Activated naive CD8-positive, alpha-beta T cell treated with anti-CD3 and anti-CD28 coated beads, Interleukin-2, amount 10 ng/mL, durations not matched to agents 7 days and 5 days (primary cell): ENCODE measurements at regions of chr12 and their contacts with region 1.

Region 1: GRCh38 chr12:111428728-111429175 is 23.0 kb downstream of the SH2B3 start:
- DNase-seq: no peak
- ATAC-seq: no peak
- H3K4me3 Mint-ChIP-seq: peak overlapping the region; percentile 84
- H3K27ac Mint-ChIP-seq: peak overlapping the region; percentile 97
- H3K4me1 Mint-ChIP-seq: peaks cover 70% of the 10 kb centered on the region
- H3K27me3 Mint-ChIP-seq: no peaks in the 10 kb centered on the region

Region 2: GRCh38 chr12:111274777-111275176 is 154.0 kb before region 1 on chr12:
- POLR2A ChIA-PET with region 1: no interaction called
- DNase-seq: no peak
- ATAC-seq: no peak
- H3K4me3 Mint-ChIP-seq: no peak overlapping the region
- H3K27ac Mint-ChIP-seq: no peak overlapping the region
- H3K4me1 Mint-ChIP-seq: peaks cover 3% of the 10 kb centered on the region
- H3K27me3 Mint-ChIP-seq: peaks cover 17% of the 10 kb centered on the region

Region 3: GRCh38 chr12:111298582-111299436 is 129.9 kb before region 1 on chr12:
- POLR2A ChIA-PET with region 1: no interaction called
- DNase-seq: peak; percentile 65
- ATAC-seq: peak; percentile 42
- H3K4me3 Mint-ChIP-seq: no peak overlapping the region
- H3K27ac Mint-ChIP-seq: no peak overlapping the region
- H3K4me1 Mint-ChIP-seq: no peaks in the 10 kb centered on the region
- H3K27me3 Mint-ChIP-seq: no peaks in the 10 kb centered on the region

Region 4: DNA sequence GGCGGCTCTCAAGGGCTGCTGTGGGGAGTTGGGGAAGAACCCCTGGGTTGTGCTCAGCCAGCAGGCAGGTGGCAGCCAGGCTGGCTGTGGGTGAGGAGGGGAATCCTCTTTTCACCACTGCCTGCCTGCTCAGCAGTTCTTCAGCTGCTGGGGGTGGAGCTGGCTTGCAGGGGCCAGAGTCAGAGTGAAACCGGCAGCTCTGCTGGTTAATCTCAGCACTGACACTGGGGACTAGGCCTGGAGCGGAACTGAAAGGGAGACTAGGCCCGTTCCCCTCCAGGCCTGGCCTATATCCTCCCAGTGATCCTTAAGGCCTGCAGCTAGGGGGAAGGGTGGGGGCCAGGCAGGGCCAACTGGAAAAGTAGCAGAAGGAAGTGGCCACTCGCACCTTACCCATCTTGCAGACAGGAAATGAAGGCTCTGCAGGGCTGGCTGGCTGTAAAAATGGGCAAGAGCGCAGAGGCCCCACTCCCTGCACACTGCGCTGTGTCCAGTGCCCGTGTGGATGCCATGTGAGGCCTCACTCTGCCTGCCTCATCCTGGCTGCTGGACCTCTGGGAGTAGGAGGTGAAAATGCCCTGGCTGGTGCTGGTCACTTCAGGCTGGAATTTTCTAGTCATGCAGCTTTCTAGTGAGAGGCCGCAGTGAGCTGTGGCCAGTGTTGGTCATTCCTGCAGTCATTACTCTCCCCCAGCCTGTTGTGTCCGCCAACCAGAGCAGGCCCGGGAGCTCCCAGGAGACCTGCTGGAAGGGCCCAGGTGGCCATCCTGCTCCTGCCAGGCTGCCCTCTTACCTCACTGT is 16.4 kb after region 1 on chr12:
- POLR2A ChIA-PET with region 1: interaction called, 89 read pairs
- DNase-seq: peak; percentile 77
- ATAC-seq: peak; percentile 94
- H3K4me3 Mint-ChIP-seq: peak overlapping the region; percentile 76
- H3K27ac Mint-ChIP-seq: peak overlapping the region; percentile 91
- H3K4me1 Mint-ChIP-seq: peaks cover 70% of the 10 kb centered on the region
- H3K27me3 Mint-ChIP-seq: no peaks in the 10 kb centered on the region